HEK293T (cell line): ENCODE measurements at regions of chr2 and their contacts with region 1.

Region 1: DNA sequence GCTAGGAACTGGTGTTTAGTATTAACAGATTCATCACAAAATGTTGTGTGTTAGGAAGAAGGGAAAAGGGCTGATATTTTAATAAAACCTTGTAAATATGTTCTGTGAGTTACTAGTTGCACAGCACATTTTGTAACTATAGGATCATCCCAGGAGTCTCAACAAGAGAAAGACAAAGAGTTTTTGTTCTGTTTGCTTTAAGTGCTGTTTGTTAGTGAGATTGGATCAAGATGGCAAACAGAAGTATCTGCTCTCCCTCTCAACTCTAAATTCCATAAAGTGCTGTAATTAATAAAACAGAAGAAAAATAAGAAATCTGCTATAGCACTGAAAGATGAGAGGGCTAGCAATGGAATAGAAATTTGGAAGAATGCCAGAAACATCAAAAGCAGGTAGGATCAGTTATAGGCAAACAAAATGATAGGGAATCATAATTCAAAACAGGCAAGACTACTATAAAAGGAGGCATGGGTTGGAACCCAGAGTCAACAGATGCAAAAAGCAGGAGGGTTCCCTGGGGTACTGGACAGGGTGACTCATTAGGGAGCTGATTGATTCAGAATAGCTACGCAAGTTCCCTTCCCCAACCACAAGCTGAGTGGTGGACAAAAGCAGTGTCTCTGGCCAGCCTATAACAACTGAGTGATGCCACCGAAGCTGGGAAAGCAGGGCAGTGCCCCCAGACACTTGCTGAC is 75.8 kb downstream of the DYNC1I2 start:
- DNase-seq: no peak

Region 2: DNA sequence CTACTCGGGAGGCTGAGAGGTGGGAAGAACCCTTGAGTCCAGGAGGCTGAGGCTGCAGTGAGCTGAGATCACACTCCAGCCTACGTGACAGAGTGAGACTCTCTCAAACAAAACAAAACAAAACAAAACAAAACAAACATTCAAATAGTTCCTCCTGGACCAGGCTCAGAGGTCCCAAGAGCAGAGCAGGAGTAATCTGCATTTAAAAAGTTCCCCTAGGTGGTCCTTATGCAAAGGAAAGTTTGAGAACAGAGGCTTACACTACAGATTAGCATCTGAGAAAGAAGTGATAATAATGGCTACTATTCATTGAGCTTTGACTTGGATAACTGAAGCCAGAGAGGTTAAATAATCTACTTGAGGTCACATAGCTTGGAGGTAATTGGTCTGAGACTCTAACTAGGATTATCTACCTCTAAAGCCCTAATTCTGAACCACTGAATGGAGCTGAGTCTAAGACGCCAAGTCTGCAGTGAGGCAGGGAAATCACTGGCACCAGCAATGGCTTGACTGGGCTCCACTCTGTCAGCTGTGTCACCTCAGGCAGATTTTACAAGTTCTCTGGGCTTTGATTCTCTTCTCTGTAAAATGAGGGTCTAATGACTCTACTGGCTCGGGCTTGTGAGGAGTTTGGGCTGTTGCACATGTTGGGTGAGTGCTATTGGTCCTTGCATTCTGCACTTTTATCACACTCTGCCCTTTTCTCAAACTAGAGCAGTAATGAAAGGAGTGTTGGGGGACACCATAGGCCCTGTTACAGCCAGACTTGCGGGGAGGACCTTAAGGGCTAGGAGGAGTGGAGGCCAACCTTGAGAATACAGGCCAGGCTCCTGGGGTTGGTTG is 368.9 kb after region 1 on chr2:
- CTCF ChIA-PET with region 1: interaction called, 12 read pairs
- POLR2A ChIA-PET with region 1: no interaction called
- DNase-seq: no peak